ENCODE measurements at regions of chr6 and their contacts with region 1.

Region 1: DNA sequence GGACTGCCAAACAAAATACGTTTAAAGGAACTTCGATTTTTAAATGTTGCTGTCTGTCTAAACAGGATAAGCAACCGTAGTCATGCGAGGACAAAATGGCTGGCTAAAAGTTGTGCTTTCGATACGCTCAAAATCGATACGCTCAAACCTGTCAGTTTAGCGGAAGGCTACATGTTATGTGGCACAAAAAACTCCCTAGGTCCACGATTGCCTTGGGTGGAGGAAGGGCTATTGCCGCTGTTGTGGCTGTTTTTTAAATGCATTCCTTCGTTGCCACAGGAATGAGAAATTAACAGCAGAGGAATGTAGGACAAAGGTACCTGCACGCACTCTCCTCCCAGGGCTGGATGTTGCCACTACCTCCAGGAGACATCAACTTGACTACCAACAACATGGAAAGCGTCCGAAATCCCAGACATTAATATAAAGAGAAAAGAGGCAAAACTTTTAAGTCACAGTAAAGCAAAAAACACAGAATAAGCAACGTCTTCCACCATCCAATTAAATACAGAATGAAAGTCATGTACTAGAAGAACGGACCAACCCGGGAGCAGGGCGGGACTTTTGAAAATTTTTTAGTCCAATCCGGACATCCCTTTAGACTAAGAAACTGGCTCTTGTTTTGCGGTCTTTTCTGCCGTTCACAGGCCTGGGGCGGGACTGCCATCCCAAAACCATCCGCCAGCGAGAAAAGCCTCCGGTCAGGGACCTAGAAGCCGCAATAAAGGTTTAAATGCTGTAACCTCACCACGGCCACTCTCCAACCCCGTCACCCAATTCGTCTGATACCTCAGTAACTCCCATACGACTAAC is 32.2 kb upstream of the HFE start:
- DNase-seq: peak; percentile 81
- ATAC-seq: peak; percentile 69
- H3K4me3 Mint-ChIP-seq: peak overlapping the region; percentile 96
- H3K27ac Mint-ChIP-seq: peak overlapping the region; percentile 100
- H3K4me1 Mint-ChIP-seq: peaks cover 32% of the 10 kb centered on the region
- H3K27me3 Mint-ChIP-seq: no peaks in the 10 kb centered on the region

Region 2: GRCh38 chr6:25962149-25963127 is 92.6 kb before region 1 on chr6 and contains the start of gene TRIM38:
- POLR2A ChIA-PET with region 1: no interaction called
- DNase-seq: peak; percentile 51
- ATAC-seq: peak; percentile 91
- H3K4me3 Mint-ChIP-seq: peak within 1 kb of the TSS; percentile 98
- H3K27ac Mint-ChIP-seq: peak within 1 kb of the TSS; percentile 98
- H3K4me1 Mint-ChIP-seq: peaks cover 52% of the 10 kb centered on the region
- H3K27me3 Mint-ChIP-seq: no peaks in the 10 kb centered on the region
- total RNA-seq, gene TRIM38: 29.1 TPM

Region 3: DNA sequence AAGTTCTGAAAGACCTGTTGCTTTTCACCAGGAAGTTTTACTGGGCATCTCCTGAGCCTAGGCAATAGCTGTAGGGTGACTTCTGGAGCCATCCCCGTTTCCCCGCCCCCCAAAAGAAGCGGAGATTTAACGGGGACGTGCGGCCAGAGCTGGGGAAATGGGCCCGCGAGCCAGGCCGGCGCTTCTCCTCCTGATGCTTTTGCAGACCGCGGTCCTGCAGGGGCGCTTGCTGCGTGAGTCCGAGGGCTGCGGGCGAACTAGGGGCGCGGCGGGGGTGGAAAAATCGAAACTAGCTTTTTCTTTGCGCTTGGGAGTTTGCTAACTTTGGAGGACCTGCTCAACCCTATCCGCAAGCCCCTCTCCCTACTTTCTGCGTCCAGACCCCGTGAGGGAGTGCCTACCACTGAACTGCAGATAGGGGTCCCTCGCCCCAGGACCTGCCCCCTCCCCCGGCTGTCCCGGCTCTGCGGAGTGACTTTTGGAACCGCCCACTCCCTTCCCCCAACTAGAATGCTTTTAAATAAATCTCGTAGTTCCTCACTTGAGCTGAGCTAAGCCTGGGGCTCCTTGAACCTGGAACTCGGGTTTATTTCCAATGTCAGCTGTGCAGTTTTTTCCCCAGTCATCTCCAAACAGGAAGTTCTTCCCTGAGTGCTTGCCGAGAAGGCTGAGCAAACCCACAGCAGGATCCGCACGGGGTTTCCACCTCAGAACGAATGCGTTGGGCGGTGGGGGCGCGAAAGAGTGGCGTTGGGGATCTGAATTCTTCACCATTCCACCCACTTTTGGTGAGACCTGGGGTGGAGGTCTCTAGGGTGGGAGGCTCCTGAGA is 32.4 kb after region 1 on chr6 and contains the start of gene HFE:
- POLR2A ChIA-PET with region 1: interaction called, 17 read pairs
- DNase-seq: peak; percentile 65
- ATAC-seq: peak; percentile 9
- H3K4me3 Mint-ChIP-seq: peak within 1 kb of the TSS; percentile 86
- H3K27ac Mint-ChIP-seq: peak within 1 kb of the TSS; percentile 81
- H3K4me1 Mint-ChIP-seq: peaks cover 50% of the 10 kb centered on the region
- H3K27me3 Mint-ChIP-seq: no peaks in the 10 kb centered on the region
- total RNA-seq, gene HFE: 5.0 to 7.2 TPM

Region 4: GRCh38 chr6:26183581-26184366 is 128.7 kb after region 1 on chr6:
- POLR2A ChIA-PET with region 1: interaction called, 25 read pairs
- DNase-seq: peak; percentile 78
- ATAC-seq: peak; percentile 85
- H3K4me3 Mint-ChIP-seq: peak overlapping the region; percentile 96
- H3K27ac Mint-ChIP-seq: peak overlapping the region; percentile 99
- H3K4me1 Mint-ChIP-seq: peaks cover 48% of the 10 kb centered on the region
- H3K27me3 Mint-ChIP-seq: no peaks in the 10 kb centered on the region

Region 5: DNA sequence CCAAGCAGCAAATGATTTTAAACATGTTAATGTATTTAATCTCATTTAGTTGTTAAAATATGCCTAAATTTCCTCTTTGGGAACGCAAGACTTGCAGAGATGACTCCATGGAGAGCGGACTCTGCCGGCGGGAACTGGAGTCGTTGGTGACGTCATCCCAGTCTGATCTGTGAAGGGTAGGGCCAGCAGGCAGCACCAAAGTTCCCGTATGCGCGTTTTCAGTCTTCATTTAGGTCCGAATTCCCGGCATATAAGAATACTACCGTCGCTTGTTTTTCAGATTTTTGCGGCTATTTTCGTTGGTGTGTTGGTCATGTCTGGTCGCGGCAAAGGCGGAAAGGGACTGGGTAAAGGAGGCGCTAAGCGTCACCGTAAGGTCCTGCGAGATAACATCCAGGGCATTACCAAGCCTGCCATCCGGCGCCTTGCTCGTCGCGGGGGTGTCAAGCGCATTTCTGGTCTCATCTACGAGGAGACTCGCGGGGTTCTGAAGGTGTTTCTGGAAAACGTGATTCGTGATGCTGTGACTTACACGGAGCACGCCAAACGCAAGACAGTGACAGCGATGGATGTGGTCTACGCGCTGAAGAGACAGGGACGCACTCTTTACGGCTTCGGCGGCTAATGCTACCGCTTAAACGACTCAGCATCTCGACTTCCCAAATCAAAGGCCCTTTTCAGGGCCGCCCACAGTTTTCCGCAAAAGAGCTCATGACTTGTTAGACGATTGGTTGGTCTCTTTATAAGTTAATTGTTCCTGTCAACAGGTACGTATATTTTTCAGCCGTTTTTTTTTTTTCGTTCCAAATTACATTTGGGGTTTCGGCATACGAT is 149.5 kb after region 1 on chr6:
- POLR2A ChIA-PET with region 1: interaction called, 82 read pairs
- DNase-seq: peak; percentile 84
- ATAC-seq: peak; percentile 64
- H3K4me3 Mint-ChIP-seq: no peak overlapping the region
- H3K27ac Mint-ChIP-seq: no peak overlapping the region
- H3K4me1 Mint-ChIP-seq: peaks cover 34% of the 10 kb centered on the region
- H3K27me3 Mint-ChIP-seq: no peaks in the 10 kb centered on the region

Region 6: GRCh38 chr6:26249957-26250697 is 195.1 kb after region 1 on chr6:
- POLR2A ChIA-PET with region 1: interaction called, 23 read pairs
- DNase-seq: peak; percentile 79
- ATAC-seq: peak; percentile 53
- H3K4me3 Mint-ChIP-seq: peak overlapping the region; percentile 90
- H3K27ac Mint-ChIP-seq: peak overlapping the region; percentile 99
- H3K4me1 Mint-ChIP-seq: peaks cover 16% of the 10 kb centered on the region
- H3K27me3 Mint-ChIP-seq: no peaks in the 10 kb centered on the region

Region 7: DNA sequence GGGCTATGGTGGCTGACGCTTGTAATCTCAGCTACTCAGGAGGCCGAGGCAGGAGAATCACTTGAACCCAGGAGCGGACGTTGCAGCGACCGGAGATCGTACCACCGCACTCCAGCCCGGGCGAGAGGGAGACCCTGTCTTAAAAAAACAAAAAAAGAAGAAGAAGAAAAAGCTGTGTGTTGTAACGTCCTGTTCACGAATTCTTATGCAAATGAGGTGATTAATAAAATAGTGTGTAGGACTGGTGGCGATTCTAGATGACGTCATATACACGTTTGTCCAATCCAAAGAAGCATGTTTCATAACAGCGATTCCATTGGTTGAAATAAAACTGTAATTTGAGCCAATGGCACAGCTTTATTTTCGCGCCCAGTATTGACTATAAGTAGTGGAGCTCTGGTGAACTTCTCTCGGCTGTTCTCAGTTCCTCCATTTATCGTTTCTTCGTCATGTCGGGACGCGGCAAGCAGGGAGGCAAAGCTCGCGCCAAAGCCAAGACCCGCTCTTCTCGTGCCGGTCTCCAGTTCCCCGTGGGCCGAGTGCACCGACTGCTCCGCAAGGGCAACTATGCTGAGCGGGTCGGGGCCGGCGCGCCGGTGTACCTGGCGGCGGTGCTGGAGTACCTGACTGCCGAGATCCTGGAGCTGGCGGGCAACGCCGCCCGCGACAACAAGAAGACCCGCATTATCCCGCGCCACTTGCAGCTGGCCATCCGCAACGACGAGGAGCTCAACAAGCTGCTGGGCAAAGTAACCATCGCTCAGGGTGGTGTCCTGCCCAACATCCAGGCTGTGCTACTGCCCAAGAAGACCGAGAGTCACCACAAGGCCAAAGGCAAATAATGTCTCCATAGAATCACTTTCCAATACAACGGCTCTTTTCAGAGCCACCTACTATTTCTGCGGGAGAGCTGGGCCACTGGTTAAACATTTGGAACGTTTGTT is 1810.1 kb after region 1 on chr6:
- POLR2A ChIA-PET with region 1: interaction called, 12 read pairs
- DNase-seq: peak; percentile 83
- ATAC-seq: peak; percentile 56
- H3K4me3 Mint-ChIP-seq: peak overlapping the region; percentile 99
- H3K27ac Mint-ChIP-seq: peak overlapping the region; percentile 100
- H3K4me1 Mint-ChIP-seq: peaks cover 57% of the 10 kb centered on the region
- H3K27me3 Mint-ChIP-seq: no peaks in the 10 kb centered on the region

Measured in activated naive CD8-positive, alpha-beta T cell treated with anti-CD3 and anti-CD28 coated beads, Interleukin-2, amount 10 ng/mL, durations not matched to agents 7 days and 5 days (primary cell).